Activated CD4-positive, alpha-beta T cell treated with anti-CD3 and anti-CD28 coated beads, Interleukin-2, amount 10 ng/mL, durations not matched to agents 24 days and 14 days (primary cell): ENCODE measurements at regions of chr10 and their contacts with region 1.

Region 1: DNA sequence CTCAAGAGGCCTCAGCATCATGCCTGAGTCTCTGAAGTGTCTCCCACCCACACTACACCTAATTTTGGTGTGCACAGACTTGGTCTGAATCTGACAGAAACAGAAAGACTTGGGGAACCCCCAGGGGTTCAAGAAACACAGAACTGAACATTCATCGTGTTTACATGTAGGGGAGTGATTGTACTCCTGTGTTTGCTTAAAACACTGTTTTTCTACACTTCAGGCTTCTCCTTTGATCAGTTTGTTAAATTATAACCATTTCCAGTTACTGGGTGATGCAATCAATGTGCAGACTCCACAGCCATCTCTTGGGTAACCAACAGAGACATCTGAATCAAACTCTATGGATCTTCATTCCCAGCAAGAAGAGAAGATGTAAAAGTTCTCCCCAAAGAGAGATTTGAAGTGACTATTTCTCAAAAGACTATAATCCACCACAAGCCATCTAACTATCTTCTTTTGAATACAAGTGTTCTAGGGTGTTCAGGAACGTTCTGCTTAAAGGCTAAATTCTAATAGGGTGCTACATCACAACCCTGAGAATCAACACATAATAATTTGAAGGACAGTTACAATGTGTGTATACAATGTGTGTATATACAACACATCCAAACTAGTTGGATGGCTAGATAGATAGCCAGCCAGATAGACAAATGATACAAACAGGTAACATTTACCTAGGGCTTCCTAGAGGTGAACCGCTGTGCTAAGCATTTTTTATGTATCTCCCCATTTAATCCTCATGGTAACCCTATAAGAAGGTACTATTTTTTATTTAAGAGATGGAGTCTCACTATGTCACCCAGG is 34.2 kb downstream of the DNAJC12 start:
- DNase-seq: no peak
- H3K4me3 Mint-ChIP-seq: peak overlapping the region; percentile 30
- H3K27ac Mint-ChIP-seq: peak overlapping the region; percentile 84
- H3K4me1 Mint-ChIP-seq: peaks cover 22% of the 10 kb centered on the region
- H3K27me3 Mint-ChIP-seq: no peaks in the 10 kb centered on the region

Region 2: DNA sequence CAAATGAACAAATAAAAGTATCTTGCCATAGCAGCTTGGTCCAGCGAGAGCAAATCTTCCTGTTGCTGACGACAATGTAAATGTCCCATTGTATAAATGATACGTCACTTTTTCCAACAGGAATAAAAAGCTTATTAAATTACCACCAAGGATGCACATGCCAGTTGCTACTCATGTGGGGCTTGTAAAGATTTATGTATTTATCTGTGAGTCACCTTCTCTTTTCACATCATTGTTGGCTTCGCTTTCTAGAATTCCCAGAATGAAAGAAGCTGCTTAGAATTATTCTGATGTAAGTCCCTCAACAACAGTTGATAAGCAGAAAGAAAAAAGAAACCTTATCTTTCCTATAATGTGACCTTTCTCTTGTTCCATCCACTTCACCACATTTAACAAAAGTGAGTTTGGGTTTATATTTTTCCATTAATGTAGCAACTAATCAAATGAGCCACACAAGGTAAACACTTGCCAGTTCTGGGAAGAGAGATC is 11.8 kb after region 1 on chr10:
- intact Hi-C with region 1: loop called (anchors 1 kb)
- DNase-seq: no peak
- H3K4me3 Mint-ChIP-seq: peak overlapping the region; percentile 37
- H3K27ac Mint-ChIP-seq: peak overlapping the region; percentile 73
- H3K4me1 Mint-ChIP-seq: peaks cover 13% of the 10 kb centered on the region
- H3K27me3 Mint-ChIP-seq: no peaks in the 10 kb centered on the region